ENCODE measurements at regions of chr3 and their contacts with region 1.

Region 1: DNA sequence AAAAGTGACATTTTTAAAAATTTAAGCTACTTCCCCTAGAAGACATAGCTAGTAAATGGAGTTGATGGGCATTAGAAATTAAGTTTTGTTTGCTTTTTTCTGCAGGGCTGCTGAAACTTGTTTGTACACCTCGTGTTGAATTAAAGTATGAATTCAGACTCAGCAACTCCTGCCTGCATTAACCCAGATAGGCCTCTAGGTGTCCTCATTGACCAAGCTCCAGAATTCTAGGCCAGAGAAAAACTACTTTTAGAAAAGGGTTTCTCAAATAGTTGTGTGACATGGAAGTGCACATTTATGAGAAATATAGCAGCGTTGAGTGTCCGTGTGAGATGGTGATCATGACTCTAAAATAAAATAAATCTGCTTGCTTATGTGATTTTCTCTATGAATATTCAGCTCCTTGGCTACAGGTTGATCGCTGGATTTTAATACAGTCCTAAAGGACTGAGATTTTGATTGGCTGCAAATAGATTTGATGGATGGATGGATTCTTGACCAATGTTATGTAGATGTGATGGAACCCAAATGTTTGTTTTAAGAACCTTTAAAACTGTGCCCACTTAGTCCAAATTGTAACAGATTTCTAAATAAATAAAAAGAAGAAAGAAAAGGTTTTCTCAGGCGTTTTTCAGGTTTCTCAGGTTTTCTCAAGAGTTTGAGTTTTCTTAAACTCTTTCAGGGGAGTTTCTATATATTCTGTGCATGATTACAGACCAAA is 39.4 kb upstream of the LMOD3 start:
- ATAC-seq: peak in 4 of 8 experiments; percentile 27 to 54 (median 35)
- H3K4me3 ChIP-seq: no peak overlapping the region
- H3K27ac ChIP-seq: no peak overlapping the region
- H3K4me1 ChIP-seq: no peaks in the 10 kb centered on the region

Region 2: DNA sequence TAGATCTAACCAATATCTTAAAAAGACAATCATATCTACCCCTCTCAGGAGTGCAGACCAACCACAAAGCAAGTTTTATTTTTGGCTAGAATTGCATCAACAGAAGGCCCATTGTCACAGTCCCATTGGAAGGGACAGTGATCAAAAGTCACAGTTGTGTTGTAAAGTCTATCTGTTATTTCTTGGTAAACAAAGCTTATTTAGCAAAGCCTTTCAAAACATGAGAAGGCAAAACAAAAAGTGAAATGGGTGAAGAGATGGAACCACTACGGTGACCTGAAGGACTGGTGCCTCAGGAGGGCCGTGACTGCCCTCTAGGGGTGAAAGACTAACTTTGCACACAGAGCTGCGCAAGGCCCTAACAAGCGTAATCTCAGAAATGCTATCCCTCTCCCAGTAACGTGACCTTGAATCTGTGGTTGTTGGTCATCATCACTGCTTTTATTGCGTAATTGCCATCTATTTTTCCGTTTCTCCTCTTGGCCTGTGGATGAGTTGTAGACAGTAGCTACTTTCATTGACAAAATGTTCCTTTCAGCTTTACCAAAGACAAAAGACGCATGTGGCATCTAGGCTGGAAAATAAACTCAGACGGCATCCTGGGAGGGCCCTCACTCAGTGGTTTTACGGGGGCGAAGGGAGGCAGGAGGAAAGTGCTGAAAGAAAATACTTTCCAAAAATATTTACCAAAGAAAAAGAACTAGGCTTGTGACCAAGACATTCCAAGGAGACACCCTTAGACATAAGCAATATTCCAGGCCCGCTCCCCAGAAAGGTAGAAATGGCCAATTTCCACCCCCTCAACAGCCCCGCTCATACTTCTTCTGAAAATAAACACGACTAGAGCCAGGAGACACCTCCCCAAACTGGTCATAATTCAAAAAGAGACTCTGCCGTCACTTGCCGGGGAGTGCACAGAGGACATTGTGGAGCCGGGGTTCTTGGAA is 144.8 kb after region 1 on chr3:
- in situ Hi-C with region 1: loop called in 5 of 9 experiments (anchors 10 to 25 kb)
- ATAC-seq: peak; percentile 96 to 99 (median 99)
- H3K4me3 ChIP-seq: no peak overlapping the region
- H3K27ac ChIP-seq: no peak overlapping the region
- H3K4me1 ChIP-seq: no peaks in the 10 kb centered on the region

Region 3: DNA sequence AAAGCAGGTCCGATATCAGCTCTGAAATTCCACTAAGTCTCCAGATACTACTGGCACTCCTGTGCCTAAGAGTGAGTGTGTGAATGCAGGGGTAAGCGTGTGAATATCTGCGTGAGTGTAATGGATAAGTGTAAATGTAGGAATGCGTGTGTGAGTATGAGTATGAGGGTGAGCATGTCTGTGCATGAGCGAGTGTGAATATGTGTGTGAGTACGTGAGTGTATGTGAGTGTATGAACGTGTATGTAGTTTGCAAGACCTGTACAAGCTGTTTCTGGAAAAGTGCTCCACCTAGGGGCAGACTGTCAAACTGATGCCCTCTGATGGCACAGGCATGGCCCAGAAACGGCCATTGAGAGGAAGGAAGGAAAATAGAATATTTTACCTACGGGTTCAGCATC is 248.5 kb after region 1 on chr3:
- in situ Hi-C with region 1: loop called in 2 of 9 experiments (anchors 25 kb)
- ATAC-seq: peak in 6 of 8 experiments; percentile 47 to 97 (median 84)
- H3K4me3 ChIP-seq: no peak overlapping the region
- H3K27ac ChIP-seq: no peak overlapping the region
- H3K4me1 ChIP-seq: peaks cover 17% of the 10 kb centered on the region in 2 donors

Region 4: GRCh38 chr3:69425261-69425660 is 263.5 kb after region 1 on chr3:
- in situ Hi-C with region 1: loop called in 3 of 9 experiments (anchors 10 to 25 kb)
- ATAC-seq: peak in 4 of 8 experiments; percentile 18 to 51 (median 40)
- H3K4me3 ChIP-seq: no peak overlapping the region
- H3K27ac ChIP-seq: no peak overlapping the region
- H3K4me1 ChIP-seq: peaks cover 0 to 3% of the 10 kb centered on the region in 2 donors

Measured in motor neuron (in vitro differentiated cells).